WTC11 (cell line): ENCODE measurements at regions of chr4 and their contacts with region 1.

Region 1: GRCh38 chr4:87543835-87544461 is 14.8 kb upstream of the SPARCL1 start:
- DNase-seq: peak; percentile 23
- ATAC-seq: peak; percentile 94
- H3K4me3 Mint-ChIP-seq: no peak overlapping the region
- H3K27ac Mint-ChIP-seq: 0 out of 2 replicates have a peak overlapping the region, but pooled peaks have one; percentile 53
- H3K4me1 Mint-ChIP-seq: peaks cover 18% of the 10 kb centered on the region
- H3K27me3 Mint-ChIP-seq: no peaks in the 10 kb centered on the region; the same call in 1 of the 2 replicates
- CTCF ChIP-seq: peak; percentile 38

Region 2: GRCh38 chr4:87209696-87210095 is 334.3 kb before region 1 on chr4:
- CTCF ChIA-PET with region 1: no interaction called
- POLR2A ChIA-PET with region 1: no interaction called
- DNase-seq: no peak
- ATAC-seq: no peak
- H3K4me3 Mint-ChIP-seq: no peak overlapping the region
- H3K27ac Mint-ChIP-seq: no peak overlapping the region
- H3K4me1 Mint-ChIP-seq: no peaks in the 10 kb centered on the region
- H3K27me3 Mint-ChIP-seq: no peaks in the 10 kb centered on the region
- CTCF ChIP-seq: no peak

Region 3: DNA sequence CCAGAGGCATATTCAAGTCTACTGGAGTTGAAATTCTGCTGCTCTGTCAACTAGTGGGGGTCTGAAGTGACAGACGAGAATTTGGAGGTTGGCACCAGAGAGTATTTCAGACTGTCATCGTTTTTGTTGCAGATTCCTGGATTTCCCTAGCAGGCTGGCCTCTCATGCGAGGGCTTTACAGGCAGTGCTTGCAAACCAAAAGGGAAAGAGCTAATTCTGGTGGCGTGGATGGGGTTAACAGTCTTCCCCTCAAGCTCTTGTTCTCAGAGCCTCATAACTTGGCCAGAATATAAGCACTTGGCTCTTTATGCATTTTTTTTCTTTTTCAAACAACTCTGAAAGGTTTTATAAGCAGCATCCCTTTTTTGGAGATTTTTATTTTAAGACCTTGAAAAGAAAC is 14.8 kb before region 1 on chr4 and contains the start of gene SPARCL1:
- CTCF ChIA-PET with region 1: interaction called, 14 read pairs
- POLR2A ChIA-PET with region 1: no interaction called
- DNase-seq: no peak
- ATAC-seq: peak; percentile 53
- H3K4me3 Mint-ChIP-seq: no peak within 1 kb of the TSS
- H3K27ac Mint-ChIP-seq: no peak within 1 kb of the TSS
- H3K4me1 Mint-ChIP-seq: peaks cover 45% of the 10 kb centered on the region
- H3K27me3 Mint-ChIP-seq: no peaks in the 10 kb centered on the region; the same call in 1 of the 2 replicates
- CTCF ChIP-seq: no peak
- total RNA-seq, gene SPARCL1: 0.82 to 0.89 TPM (median 0.85 TPM) in 3 replicates